ENCODE measurements at regions of chr5 and their contacts with region 1.

Region 1: DNA sequence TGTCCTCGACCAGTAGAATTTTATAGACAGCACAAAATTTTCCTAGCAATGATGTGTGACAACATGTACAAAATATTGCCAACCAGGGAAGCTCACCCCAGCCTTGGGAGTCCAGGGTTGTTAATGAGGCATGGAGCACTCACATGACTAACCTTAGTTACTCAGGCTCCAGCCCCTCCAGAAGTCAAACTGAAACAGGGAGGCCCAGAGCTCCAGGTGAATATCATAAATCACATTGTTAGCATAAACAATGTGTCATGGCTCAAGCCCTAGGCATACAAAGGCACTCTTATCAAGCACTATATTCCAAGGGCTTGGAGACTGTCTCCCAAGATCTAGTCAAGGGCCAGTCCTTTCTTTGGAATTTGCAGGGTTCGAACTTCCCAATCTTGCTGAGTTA is 44.4 kb downstream of the TNFAIP8 start:
- DNase-seq: peak; percentile 51 to 76
- H3K4me3 ChIP-seq: no peak overlapping the region
- H3K4me3 Mint-ChIP-seq: no peak overlapping the region
- H3K27ac Mint-ChIP-seq: peak overlapping the region; percentile 21
- H3K4me1 ChIP-seq: peaks cover 8% of the 10 kb centered on the region; the same call in 1 of the 2 replicates
- H3K4me1 Mint-ChIP-seq: peaks cover 7% of the 10 kb centered on the region
- H3K27me3 ChIP-seq: no peaks in the 10 kb centered on the region
- H3K27me3 Mint-ChIP-seq: no peaks in the 10 kb centered on the region
- CTCF ChIP-seq: no peak

Region 2: GRCh38 chr5:119328753-119329602 is 71.3 kb before region 1 on chr5:
- CTCF ChIA-PET with region 1: no interaction called
- POLR2A ChIA-PET with region 1: no interaction called
- intact Hi-C with region 1: no loop called
- DNase-seq: no peak
- H3K4me3 ChIP-seq: no peak overlapping the region
- H3K4me3 Mint-ChIP-seq: no peak overlapping the region
- H3K27ac Mint-ChIP-seq: no peak overlapping the region
- H3K4me1 ChIP-seq: peaks cover 9% of the 10 kb centered on the region; the same call in 1 of the 2 replicates
- H3K4me1 Mint-ChIP-seq: peaks cover 22% of the 10 kb centered on the region
- H3K27me3 ChIP-seq: no peaks in the 10 kb centered on the region
- H3K27me3 Mint-ChIP-seq: no peaks in the 10 kb centered on the region
- CTCF ChIP-seq: no peak

Region 3: GRCh38 chr5:119360905-119361593 is 39.2 kb before region 1 on chr5:
- CTCF ChIA-PET with region 1: no interaction called
- POLR2A ChIA-PET with region 1: no interaction called
- intact Hi-C with region 1: loop called (anchors 2 kb)
- DNase-seq: no peak
- H3K4me3 ChIP-seq: no peak overlapping the region
- H3K4me3 Mint-ChIP-seq: no peak overlapping the region
- H3K27ac Mint-ChIP-seq: no peak overlapping the region
- H3K4me1 ChIP-seq: peaks cover 4% of the 10 kb centered on the region; the same call in 1 of the 2 replicates
- H3K4me1 Mint-ChIP-seq: peaks cover 12% of the 10 kb centered on the region
- H3K27me3 ChIP-seq: no peaks in the 10 kb centered on the region
- H3K27me3 Mint-ChIP-seq: no peaks in the 10 kb centered on the region
- CTCF ChIP-seq: no peak

Region 4: GRCh38 chr5:119379942-119380547 is 20.2 kb before region 1 on chr5:
- CTCF ChIA-PET with region 1: no interaction called
- POLR2A ChIA-PET with region 1: no interaction called
- intact Hi-C with region 1: loop called (anchors 1 kb)
- DNase-seq: no peak
- H3K4me3 ChIP-seq: no peak overlapping the region
- H3K4me3 Mint-ChIP-seq: no peak overlapping the region
- H3K27ac Mint-ChIP-seq: no peak overlapping the region
- H3K4me1 ChIP-seq: peaks cover 29% of the 10 kb centered on the region
- H3K4me1 Mint-ChIP-seq: peaks cover 27% of the 10 kb centered on the region
- H3K27me3 ChIP-seq: no peaks in the 10 kb centered on the region
- H3K27me3 Mint-ChIP-seq: no peaks in the 10 kb centered on the region
- CTCF ChIP-seq: no peak

Measured in Caco-2 (cell line).